K562 (cell line): ENCODE measurements at regions of chr10 and their contacts with region 1.

Region 1: DNA sequence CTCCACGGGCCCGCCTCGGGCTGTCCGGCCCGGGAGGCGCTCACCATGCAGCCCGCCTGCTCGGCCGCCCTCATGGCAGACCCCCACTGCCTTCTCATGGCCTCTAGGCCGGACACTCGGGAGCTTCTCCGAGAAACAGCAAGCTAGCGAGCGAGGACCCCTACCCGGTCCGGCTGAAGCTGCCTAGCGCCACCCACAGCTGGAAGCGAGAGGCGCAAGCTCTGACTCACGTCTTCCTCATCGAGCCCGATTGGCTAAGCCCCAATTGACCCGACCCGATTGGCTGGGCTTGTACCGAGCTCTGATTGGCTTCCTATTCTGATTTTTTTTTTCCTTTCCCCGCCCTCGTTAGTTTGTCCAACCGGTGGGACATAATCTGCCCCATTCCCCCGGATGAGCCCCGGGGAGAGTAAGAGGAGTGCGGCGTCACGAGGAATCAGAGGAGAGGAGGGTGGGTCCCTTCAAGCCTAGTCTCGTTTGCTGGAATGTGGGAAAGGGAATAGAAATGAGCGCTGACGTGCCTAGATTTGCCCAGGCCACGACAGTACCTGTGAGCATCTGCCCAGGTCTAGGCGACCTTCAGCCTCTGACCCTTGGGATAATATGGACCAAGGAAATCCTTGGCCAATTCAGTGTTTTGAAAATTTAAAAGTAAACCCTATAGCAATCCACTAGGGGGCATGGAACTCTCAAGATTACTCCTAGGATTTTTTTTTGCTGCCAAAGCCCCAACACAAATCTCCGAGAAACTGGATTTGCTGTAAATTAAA is at the start of gene TYSND1:
- DNase-seq: peak in 2 of 4 experiments; percentile 46 to 58
- ATAC-seq: 0 out of 3 replicates have a peak, but pooled peaks have one; percentile 27
- H3K4me3 ChIP-seq: no peak within 1 kb of the TSS
- H3K27ac ChIP-seq: no peak within 1 kb of the TSS
- H3K4me1 ChIP-seq: peaks cover 0 to 7% of the 10 kb centered on the region in 2 experiments; a peak in 2 of 5 replicates
- H3K27me3 ChIP-seq: no peaks in the 10 kb centered on the region
- CTCF ChIP-seq: peak; percentile 10 to 38 (median 36); a peak in 3 of 6 replicates
- EP300 ChIP-seq: no peak
- POLR2A ChIP-seq: 0 out of 2 replicates have a peak, but pooled peaks have one; percentile 20
- RAD21 ChIP-seq: peak in 1 of 2 experiments; percentile 12; a peak in 1 of 4 replicates
- polyA plus RNA-seq, gene TYSND1: 0.60 to 0.65 TPM

Region 2: GRCh38 chr10:70169649-70170364 is 23.1 kb after region 1 on chr10:
- CTCF ChIA-PET with region 1: no interaction called
- POLR2A ChIA-PET with region 1: interaction called, 11 read pairs
- in situ Hi-C with region 1: no loop called
- intact Hi-C with region 1: no loop called
- DNase-seq: peak in 2 of 4 experiments; percentile 40 to 42
- ATAC-seq: peak; percentile 48
- H3K4me3 ChIP-seq: peak overlapping the region; percentile 86
- H3K27ac ChIP-seq: peak overlapping the region; percentile 92
- H3K4me1 ChIP-seq: peaks cover 2 to 12% of the 10 kb centered on the region in 2 experiments; a peak in 4 of 5 replicates
- H3K27me3 ChIP-seq: no peaks in the 10 kb centered on the region
- CTCF ChIP-seq: no peak
- EP300 ChIP-seq: no peak
- POLR2A ChIP-seq: no peak
- RAD21 ChIP-seq: no peak